ENCODE measurements at regions of chr5 and their contacts with region 1.

Region 1: DNA sequence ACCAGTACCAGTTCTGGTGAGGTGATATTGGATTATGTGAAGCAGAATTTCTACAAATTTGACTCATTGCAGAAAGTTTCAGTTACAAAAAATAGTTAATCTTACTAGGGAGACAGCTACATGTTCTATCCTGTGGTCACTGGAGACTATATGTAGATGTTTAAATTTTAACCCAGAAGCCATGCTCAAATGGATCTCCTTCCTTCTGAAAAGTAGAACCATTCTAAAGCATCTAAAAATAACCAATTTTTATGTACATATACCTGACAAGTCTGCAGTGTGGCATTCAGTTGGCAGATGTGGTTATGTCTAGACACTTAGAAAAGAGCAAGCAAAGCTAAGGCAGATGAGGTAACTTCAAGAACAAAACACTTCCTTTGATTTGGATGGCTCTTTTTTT is 65.5 kb upstream of the POU4F3 start:
- DNase-seq: no peak
- ATAC-seq: no peak
- H3K4me3 ChIP-seq: no peak overlapping the region
- H3K27ac ChIP-seq: no peak overlapping the region
- H3K4me1 ChIP-seq: no peaks in the 10 kb centered on the region
- H3K27me3 ChIP-seq: no peaks in the 10 kb centered on the region
- CTCF ChIP-seq: no peak

Region 2: DNA sequence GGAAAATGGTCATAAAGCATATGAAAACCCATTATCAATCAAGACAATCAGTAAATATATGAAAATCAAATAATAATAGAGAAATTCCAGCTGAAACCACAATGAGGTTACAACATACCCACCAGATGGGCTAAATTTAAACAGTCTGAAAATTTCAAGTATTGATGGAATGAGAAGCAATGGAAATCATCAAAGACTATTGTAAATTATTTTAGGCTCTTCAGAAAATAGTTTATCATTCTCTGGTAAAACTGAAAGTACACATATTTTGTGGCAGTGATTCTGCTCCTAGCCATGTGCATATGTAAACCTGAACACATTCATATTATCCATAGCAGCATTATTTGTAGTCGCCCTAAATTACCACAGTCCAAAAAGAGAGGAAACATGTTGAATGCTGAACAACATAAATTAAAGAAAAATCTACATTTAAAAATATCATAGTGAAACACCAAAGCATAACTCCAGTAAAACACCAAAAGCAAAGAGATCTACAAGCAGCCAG is 653.3 kb before region 1 on chr5:
- intact Hi-C with region 1: no loop called
- DNase-seq: no peak
- ATAC-seq: no peak
- H3K4me3 ChIP-seq: no peak overlapping the region
- H3K27ac ChIP-seq: no peak overlapping the region
- H3K4me1 ChIP-seq: no peaks in the 10 kb centered on the region
- H3K27me3 ChIP-seq: no peaks in the 10 kb centered on the region
- CTCF ChIP-seq: no peak

Region 3: GRCh38 chr5:146137967-146138403 is 135.1 kb before region 1 on chr5:
- intact Hi-C with region 1: loop called (anchors 10 kb)
- DNase-seq: no peak
- ATAC-seq: no peak
- H3K4me3 ChIP-seq: no peak overlapping the region
- H3K27ac ChIP-seq: no peak overlapping the region
- H3K4me1 ChIP-seq: no peaks in the 10 kb centered on the region
- H3K27me3 ChIP-seq: no peaks in the 10 kb centered on the region
- CTCF ChIP-seq: no peak

Region 4: GRCh38 chr5:146165460-146165859 is 107.6 kb before region 1 on chr5:
- intact Hi-C with region 1: loop called in 1 of 2 experiments (anchors 10 kb)
- DNase-seq: no peak
- ATAC-seq: no peak
- H3K4me3 ChIP-seq: no peak overlapping the region
- H3K27ac ChIP-seq: no peak overlapping the region
- H3K4me1 ChIP-seq: no peaks in the 10 kb centered on the region
- H3K27me3 ChIP-seq: no peaks in the 10 kb centered on the region
- CTCF ChIP-seq: no peak

Region 5: DNA sequence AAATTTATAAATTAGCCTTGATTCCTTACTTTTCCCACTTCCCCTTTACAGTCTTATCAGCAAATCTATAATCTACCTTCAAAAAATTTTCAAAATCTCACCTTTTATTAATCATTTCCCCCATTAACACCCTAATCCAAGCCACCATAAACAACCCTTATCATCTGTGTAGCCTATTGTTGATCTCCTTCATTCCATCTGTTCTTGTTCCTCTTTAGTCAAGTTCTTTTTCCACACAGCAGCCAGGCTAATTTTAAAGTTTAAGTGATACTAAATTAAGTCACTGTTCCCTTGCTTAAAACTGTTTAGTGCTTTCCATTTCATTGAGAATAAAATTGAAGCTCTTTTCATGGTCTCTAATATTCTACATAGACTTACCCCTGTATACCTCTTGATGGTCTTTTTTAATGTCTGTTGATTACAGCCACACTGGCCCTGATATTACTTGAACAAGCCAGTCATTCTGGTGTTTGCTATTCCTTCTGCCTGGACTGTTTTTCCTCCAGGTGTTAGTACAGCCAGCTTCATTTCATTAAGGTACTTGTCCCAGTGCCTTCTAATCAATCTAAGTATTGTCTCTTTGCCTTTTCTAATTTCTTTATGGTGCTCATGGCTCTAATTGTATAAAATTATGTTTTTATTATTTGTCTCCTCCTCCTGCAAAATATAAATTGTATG is 211.7 kb after region 1 on chr5:
- intact Hi-C with region 1: loop called in 1 of 2 experiments (anchors 10 kb)
- DNase-seq: no peak
- ATAC-seq: no peak
- H3K4me3 ChIP-seq: no peak overlapping the region
- H3K27ac ChIP-seq: no peak overlapping the region
- H3K4me1 ChIP-seq: no peaks in the 10 kb centered on the region
- H3K27me3 ChIP-seq: no peaks in the 10 kb centered on the region
- CTCF ChIP-seq: no peak

Region 6: GRCh38 chr5:146565764-146566367 is 292.8 kb after region 1 on chr5:
- intact Hi-C with region 1: no loop called
- DNase-seq: no peak
- ATAC-seq: peak in 2 of 4 donors; percentile 42 to 54
- H3K4me3 ChIP-seq: no peak overlapping the region
- H3K27ac ChIP-seq: no peak overlapping the region
- H3K4me1 ChIP-seq: no peaks in the 10 kb centered on the region
- H3K27me3 ChIP-seq: no peaks in the 10 kb centered on the region
- CTCF ChIP-seq: peak; percentile 14

Measured in psoas muscle (tissue), 8 donors.